ENCODE measurements at regions of chr4 and their contacts with region 1.

Region 1: DNA sequence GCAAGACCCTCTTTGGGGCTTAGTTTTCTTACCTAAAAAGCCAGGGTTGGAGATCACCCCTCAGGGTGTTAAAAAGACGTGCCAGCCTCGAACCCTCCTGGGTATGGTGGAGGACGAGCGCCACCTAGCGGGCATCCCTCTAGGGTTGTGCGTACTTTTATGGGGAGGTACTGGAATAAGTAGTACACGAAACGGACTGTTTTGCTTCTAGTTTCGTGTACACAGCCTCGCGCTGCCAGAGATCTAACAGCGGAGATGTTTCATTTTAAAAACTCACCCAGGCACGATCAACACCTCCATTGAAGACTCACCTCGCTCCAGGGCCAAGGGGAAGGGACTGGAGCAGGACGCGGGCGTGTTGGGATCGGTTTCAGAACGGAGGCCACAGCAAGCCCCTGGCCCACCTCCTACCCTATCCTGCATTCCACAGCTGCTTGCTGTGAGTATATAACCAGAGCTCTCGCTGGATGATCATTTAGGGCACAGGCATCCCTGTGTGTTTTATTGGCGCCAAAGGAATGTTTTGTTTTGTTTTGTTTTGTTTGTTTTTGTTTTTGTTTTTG is 4.8 kb upstream of the NKX3-2 start:
- ATAC-seq: peak in 7 of 8 experiments; percentile 17 to 45 (median 26)
- H3K4me3 ChIP-seq: peak overlapping the region in 4 of 5 donors; percentile 6 to 23 (median 14)
- H3K27ac ChIP-seq: no peak overlapping the region
- H3K4me1 ChIP-seq: peaks cover 4 to 5% of the 10 kb centered on the region in 2 donors

Region 2: GRCh38 chr4:12701384-12701783 is 847.7 kb before region 1 on chr4:
- in situ Hi-C with region 1: no loop called
- ATAC-seq: no peak
- H3K4me3 ChIP-seq: no peak overlapping the region
- H3K27ac ChIP-seq: no peak overlapping the region
- H3K4me1 ChIP-seq: peaks cover 0 to 3% of the 10 kb centered on the region in 2 donors

Region 3: DNA sequence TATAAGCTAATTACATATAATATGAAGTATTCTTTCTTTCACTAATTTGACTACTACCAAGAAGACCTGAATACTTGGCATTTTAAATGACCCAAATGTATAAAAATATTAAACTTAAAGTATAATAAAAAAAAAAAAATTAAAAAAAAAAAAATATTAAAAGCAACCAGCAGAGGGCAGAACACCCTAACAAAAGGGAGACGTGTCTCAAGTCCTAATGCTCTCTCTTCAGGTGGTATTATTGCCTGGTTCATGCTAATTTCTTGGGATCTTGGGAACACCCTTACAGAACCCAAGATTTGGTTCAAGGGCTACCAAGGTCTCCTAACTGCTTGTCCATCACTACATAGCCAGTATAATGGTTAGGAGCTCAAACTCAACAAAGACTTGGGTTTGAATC is 819.7 kb before region 1 on chr4:
- in situ Hi-C with region 1: loop called in 7 of 9 experiments (anchors 25 kb)
- ATAC-seq: peak in 1 of 8 experiments; percentile 23
- H3K4me3 ChIP-seq: no peak overlapping the region
- H3K27ac ChIP-seq: no peak overlapping the region
- H3K4me1 ChIP-seq: no peaks in the 10 kb centered on the region

Region 4: GRCh38 chr4:12846368-12846767 is 702.7 kb before region 1 on chr4:
- in situ Hi-C with region 1: loop called (anchors 10 to 25 kb)
- ATAC-seq: peak in 1 of 8 experiments; percentile 56
- H3K4me3 ChIP-seq: no peak overlapping the region
- H3K27ac ChIP-seq: no peak overlapping the region
- H3K4me1 ChIP-seq: no peaks in the 10 kb centered on the region

Region 5: DNA sequence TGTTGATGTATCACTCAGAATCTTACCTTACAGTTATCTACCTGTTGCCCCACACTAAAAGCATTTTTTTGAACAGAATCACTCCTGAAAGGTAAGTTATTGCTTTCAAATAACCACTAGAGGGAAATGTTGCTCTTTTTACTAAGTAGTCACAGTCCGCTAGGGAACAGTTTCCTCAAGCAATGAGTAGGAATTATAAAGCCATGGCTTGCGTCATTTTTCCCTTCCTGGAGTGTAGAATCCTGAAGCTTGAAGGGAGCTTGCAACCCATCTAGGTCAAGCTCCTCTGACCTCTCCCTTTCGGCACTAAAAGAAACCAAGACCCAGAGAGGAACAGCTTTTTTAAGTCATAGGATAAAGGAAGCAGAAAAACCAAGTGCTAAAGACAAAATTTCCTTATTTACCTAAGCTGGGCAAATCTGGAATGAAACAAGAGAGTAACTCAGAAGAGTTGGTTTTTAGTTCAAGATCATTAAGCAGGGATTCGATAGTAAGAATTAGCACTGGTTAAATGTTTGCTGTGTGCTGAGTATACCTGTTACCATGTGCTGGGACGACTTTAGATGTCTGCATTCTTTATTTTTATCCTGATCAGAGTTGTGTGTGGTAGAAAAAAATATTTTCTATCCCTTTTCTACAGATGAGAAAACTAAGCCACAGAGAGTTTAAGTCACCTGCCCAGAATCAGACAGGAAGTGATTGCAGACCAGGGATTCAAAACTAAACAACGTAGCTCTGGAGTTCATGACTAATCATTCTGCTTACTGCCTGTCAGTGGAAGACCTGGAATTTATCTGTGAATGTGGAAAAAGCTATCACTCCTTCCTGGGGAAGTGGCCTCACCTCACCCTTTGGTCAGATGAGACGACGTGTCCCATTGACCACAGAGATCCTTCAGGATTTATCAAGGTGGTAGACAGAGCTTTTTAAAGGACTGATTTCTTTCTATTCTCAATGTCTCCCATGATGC is 696.4 kb before region 1 on chr4:
- in situ Hi-C with region 1: loop called (anchors 10 to 25 kb)
- ATAC-seq: peak; percentile 80 to 92 (median 91)
- H3K4me3 ChIP-seq: no peak overlapping the region
- H3K27ac ChIP-seq: no peak overlapping the region
- H3K4me1 ChIP-seq: peaks cover 3 to 7% of the 10 kb centered on the region in 2 donors

Region 6: DNA sequence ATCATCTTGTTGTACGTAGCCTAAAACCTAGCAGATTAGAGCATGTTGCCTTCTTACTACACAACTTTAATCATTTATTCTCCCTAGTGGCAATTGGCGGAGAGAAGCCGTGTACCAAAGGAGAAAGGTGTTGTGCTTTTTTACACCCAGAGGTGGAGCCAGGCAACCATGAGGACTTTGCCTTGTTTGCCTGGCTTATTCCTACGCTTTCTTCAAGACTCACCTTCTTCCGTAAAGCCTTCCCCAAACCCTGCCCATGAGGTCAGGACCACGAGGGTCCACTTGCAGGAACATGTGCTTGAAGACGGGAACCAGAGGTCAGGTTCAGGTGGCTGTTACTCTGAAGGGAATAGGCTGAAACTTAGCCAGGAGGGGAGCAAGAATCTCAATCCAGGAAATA is 355.4 kb before region 1 on chr4:
- in situ Hi-C with region 1: no loop called
- ATAC-seq: no peak
- H3K4me3 ChIP-seq: no peak overlapping the region
- H3K27ac ChIP-seq: no peak overlapping the region
- H3K4me1 ChIP-seq: no peaks in the 10 kb centered on the region

Region 7: GRCh38 chr4:13821522-13821921 is 272.5 kb after region 1 on chr4:
- in situ Hi-C with region 1: no loop called
- ATAC-seq: peak in 1 of 8 experiments; percentile 26
- H3K4me3 ChIP-seq: no peak overlapping the region
- H3K27ac ChIP-seq: no peak overlapping the region
- H3K4me1 ChIP-seq: no peaks in the 10 kb centered on the region

Region 8: GRCh38 chr4:14143892-14144291 is 594.8 kb after region 1 on chr4:
- in situ Hi-C with region 1: no loop called
- ATAC-seq: no peak
- H3K4me3 ChIP-seq: no peak overlapping the region
- H3K27ac ChIP-seq: no peak overlapping the region
- H3K4me1 ChIP-seq: peaks cover 3 to 5% of the 10 kb centered on the region in 2 donors

Measured in motor neuron (in vitro differentiated cells).